OCI-LY7 (cell line): ENCODE measurements at regions of chr14 and their contacts with region 1.

Region 1: DNA sequence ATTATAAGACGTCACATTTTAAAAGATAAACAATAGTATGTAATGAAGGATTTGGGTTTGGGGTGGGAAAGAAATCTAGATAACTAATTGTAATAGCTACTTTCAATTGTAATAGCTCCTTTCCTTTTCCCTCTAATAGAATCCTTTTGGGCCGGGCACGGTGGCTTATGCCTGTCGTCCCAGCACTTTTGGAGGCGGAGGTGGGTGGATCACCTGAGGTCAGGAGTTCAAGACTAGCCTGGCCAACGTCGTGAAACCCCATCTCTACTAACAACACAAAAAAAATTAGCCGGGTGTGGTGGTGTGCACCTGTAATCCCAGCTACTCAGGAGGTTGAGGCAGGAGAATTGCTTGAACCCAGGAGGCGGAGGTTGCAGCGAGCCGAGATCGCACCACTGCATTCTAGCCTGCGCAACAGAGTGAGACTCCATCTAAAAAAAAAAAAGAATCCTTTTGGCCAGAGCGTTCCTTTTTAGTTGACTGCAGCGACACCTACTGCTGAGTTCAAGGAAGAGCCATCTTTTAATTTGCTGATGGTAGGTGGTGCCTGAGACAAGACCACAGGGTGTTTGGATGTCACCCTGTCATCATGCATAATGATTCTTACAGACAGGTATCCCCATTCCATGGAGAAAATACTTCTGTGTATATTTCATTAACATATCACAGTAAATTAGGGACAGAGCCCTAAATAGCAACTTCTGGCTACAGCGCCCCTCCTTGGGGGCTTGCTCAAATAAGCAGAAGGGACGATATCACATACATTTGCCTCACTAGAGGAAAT is 79.5 kb downstream of the ARMH4 start:
- DNase-seq: peak; percentile 57
- H3K4me3 ChIP-seq: no peak overlapping the region
- H3K27ac ChIP-seq: no peak overlapping the region
- H3K4me1 ChIP-seq: no peaks in the 10 kb centered on the region
- CTCF ChIP-seq: peak; percentile 82

Region 2: DNA sequence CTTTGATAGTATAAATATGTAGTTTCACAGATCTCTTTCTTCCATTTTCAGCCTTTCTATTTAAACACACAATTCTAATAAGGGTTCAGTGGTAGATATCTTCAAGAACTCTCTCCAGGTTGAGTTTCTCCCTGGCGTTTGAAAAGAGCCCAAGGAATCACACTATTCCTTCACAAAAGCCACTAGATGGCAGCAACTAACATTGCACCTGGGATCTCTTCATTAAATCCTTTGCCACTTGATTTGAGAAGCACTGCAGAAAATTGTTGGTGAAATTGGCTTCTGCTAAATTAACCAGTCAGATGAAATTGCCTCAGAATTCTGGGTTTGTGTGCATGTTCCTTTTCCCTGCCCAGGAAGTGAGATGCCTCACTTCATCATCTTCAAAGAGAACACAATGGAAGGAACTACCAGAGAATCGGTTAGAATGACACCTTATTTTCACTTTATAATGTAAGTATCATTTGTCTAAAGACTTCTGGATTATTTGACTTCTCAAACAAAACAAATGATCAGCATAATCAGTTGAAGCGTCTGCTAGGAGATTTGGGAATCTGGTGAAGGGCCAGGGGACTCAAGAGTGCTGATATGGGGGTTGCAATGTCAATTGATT is 585.6 kb before region 1 on chr14:
- CTCF ChIA-PET with region 1: no interaction called
- POLR2A ChIA-PET with region 1: no interaction called
- intact Hi-C with region 1: loop called (anchors 2 kb)
- DNase-seq: peak; percentile 67
- H3K4me3 ChIP-seq: no peak overlapping the region
- H3K27ac ChIP-seq: no peak overlapping the region
- H3K4me1 ChIP-seq: peaks cover 28% of the 10 kb centered on the region
- CTCF ChIP-seq: peak; percentile 92